Esophagus muscularis mucosa (tissue), 4 donors: ENCODE measurements at regions of chr13 and their contacts with region 1.

Region 1: GRCh38 chr13:41681587-41681986 is 224.2 kb downstream of the RGCC start:
- DNase-seq: no peak
- H3K4me3 ChIP-seq: no peak overlapping the region
- H3K27ac ChIP-seq: no peak overlapping the region
- H3K4me1 ChIP-seq: peaks cover 7 to 24% (median 19%) of the 10 kb centered on the region in 4 donors
- H3K27me3 ChIP-seq: no peaks in the 10 kb centered on the region
- CTCF ChIP-seq: no peak
- EP300 ChIP-seq: no peak
- POLR2A ChIP-seq: no peak

Region 2: DNA sequence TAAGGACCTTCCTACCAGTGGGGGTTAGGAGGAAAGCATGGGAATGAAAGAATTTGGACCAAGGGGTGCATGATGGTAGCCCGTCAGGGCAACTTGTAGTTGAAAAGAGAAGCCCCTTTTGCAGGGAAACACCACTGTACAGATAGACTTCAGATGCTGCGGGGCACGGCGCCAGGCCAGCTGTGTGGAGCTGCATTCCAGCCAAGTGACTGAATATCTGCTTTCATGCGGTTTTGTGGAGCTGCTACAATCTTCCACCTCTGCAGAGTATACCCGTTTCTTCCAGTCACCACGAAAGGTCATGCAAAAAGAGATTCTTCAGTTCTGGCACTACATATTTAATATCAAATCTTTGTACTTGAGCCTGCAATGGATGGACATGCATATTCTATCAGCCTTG is 119.5 kb before region 1 on chr13:
- intact Hi-C with region 1: no loop called
- DNase-seq: no peak
- H3K4me3 ChIP-seq: no peak overlapping the region
- H3K27ac ChIP-seq: peak overlapping the region in 1 of 4 donors; percentile 8
- H3K4me1 ChIP-seq: peaks cover 18 to 31% (median 27%) of the 10 kb centered on the region in 4 donors
- H3K27me3 ChIP-seq: no peaks in the 10 kb centered on the region
- CTCF ChIP-seq: no peak
- EP300 ChIP-seq: no peak
- POLR2A ChIP-seq: no peak

Region 3: DNA sequence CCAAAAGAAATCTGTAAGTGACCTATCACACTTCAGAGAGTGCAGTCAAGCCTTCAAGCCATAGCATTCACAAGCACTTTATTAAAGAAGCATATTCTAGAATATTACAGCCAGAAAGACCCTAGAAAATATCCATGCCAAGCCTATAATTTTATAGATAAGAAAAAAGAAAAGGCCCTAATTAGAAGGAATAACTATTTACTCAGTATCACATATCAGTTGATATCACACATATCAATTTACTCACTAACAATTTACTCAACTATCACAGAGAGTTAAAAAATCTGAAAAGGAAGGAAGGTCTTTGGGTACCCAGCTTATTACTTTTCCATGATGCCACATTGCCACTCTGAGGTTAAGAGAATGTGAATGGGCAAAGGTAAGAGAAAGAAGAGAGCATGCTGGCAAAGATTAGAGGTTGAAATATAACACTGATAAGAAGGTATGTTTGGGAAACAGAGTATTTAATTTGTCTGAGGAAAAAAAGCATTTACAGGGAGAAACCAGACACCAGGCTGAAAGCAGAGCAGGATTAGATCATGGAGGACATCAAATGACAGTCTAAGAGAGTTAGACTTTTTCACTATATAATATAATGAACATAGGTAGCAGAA is 93.1 kb after region 1 on chr13:
- intact Hi-C with region 1: loop called (anchors 10 kb)
- DNase-seq: no peak
- H3K4me3 ChIP-seq: no peak overlapping the region
- H3K27ac ChIP-seq: no peak overlapping the region
- H3K4me1 ChIP-seq: no peaks in the 10 kb centered on the region
- H3K27me3 ChIP-seq: no peaks in the 10 kb centered on the region
- CTCF ChIP-seq: no peak
- EP300 ChIP-seq: no peak
- POLR2A ChIP-seq: no peak